Posterior vena cava (tissue), 2 donors: ENCODE measurements at regions of chr9 and their contacts with region 1.

Region 1: GRCh38 chr9:69549310-69550202 is 122.6 kb downstream of the APBA1 start:
- DNase-seq: no peak

Region 2: GRCh38 chr9:69421908-69422801 is 127.4 kb before region 1 on chr9:
- intact Hi-C with region 1: loop called (anchors 5 kb)
- DNase-seq: no peak

Region 3: DNA sequence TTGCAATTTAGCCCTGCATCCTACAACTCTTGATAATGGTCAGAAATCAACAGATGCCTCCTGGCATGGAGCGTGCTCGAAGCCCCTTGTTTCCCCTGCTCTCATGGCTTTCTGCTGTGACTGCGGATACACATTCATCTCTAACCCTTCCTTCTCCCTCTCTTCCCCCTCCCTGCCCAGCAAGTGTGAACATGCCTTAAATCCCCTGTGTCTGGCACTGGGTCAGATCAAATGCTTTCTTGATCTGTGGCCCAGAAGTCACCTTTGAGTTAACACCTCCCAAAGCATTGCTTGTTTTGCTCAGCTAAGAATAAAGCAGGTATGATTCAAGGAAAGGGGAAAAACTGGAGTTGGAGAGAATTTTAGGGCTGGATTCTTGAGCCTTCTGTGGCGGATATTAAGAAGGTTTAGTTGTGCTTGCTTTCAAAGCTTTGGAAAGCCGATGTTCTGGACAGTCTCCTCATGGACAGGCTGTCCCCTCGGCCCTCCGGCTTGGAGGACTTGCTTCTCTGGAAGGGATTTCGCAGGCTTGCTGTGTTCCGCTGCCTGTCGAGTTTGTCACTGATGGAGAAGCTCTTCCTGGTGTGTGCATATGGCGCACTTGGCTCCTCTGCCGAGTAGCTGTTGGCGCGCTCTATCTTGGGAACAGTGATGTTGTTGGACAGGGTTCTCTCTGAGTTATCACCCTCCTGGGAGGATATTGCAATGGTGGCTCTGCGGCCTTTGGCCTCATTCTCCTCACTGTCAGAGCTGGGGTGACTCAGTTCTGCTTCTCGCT is 986.2 kb after region 1 on chr9:
- intact Hi-C with region 1: loop called in 1 of 2 experiments (anchors 5 kb)
- DNase-seq: no peak